ENCODE measurements at regions of chr20 and their contacts with region 1.

Region 1: GRCh38 chr20:39885975-39886649 is 802.9 kb downstream of the MAFB start:
- DNase-seq: peak; percentile 33 to 70
- ATAC-seq: peak; percentile 63 to 82
- H3K4me3 ChIP-seq: no peak overlapping the region
- H3K27ac ChIP-seq: no peak overlapping the region
- H3K4me1 ChIP-seq: no peaks in the 10 kb centered on the region
- H3K27me3 ChIP-seq: no peaks in the 10 kb centered on the region
- CTCF ChIP-seq: peak in 4 of 5 experiments; percentile 57 to 69 (median 63)
- POLR2A ChIP-seq: no peak

Region 2: GRCh38 chr20:39623584-39624234 is 262.4 kb before region 1 on chr20:
- in situ Hi-C with region 1: no loop called
- intact Hi-C with region 1: no loop called
- DNase-seq: peak in 1 of 2 donors; percentile 14
- ATAC-seq: peak; percentile 66 to 69
- H3K4me3 ChIP-seq: no peak overlapping the region
- H3K27ac ChIP-seq: peak overlapping the region in 2 of 4 donors; percentile 7 to 21
- H3K4me1 ChIP-seq: no peaks in the 10 kb centered on the region
- H3K27me3 ChIP-seq: no peaks in the 10 kb centered on the region
- CTCF ChIP-seq: no peak
- POLR2A ChIP-seq: no peak

Region 3: GRCh38 chr20:39849664-39850063 is 36.4 kb before region 1 on chr20:
- in situ Hi-C with region 1: no loop called
- intact Hi-C with region 1: no loop called
- DNase-seq: peak; percentile 35 to 60
- ATAC-seq: peak in 1 of 2 donors; percentile 26
- H3K4me3 ChIP-seq: no peak overlapping the region
- H3K27ac ChIP-seq: no peak overlapping the region
- H3K4me1 ChIP-seq: peaks cover 9 to 13% of the 10 kb centered on the region in 2 donors
- H3K27me3 ChIP-seq: no peaks in the 10 kb centered on the region
- CTCF ChIP-seq: no peak
- POLR2A ChIP-seq: no peak

Region 4: GRCh38 chr20:40251284-40251932 is 365.3 kb after region 1 on chr20:
- in situ Hi-C with region 1: no loop called
- intact Hi-C with region 1: loop called (anchors 1 kb)
- DNase-seq: no peak
- ATAC-seq: no peak
- H3K4me3 ChIP-seq: no peak overlapping the region
- H3K27ac ChIP-seq: no peak overlapping the region
- H3K4me1 ChIP-seq: peaks cover 0 to 4% of the 10 kb centered on the region in 2 donors
- H3K27me3 ChIP-seq: no peaks in the 10 kb centered on the region
- CTCF ChIP-seq: peak; percentile 17 to 53 (median 28)
- POLR2A ChIP-seq: no peak

Region 5: DNA sequence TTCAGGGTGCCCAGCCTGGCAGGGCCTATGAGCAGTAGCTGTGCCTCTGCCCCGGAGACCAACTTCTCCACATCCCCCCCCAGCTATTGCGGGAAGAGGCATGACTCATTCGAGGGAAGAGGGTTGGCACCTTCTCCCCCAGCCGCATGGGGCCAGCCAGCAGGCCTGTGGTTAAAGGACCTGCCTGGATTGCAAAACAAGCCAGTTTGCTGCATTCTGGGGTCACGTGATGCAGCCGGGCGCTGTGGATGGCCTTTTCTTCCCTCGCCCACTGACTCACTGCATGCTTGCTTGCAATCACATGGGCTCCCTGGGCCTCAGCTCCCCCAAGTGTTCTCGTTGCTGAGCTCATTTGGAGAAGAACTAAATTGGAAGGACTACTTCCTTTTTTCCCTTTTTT is 620.5 kb after region 1 on chr20:
- in situ Hi-C with region 1: loop called in 1 of 4 experiments (anchors 25 kb)
- intact Hi-C with region 1: no loop called
- DNase-seq: peak; percentile 84 to 88
- ATAC-seq: peak; percentile 81 to 89
- H3K4me3 ChIP-seq: no peak overlapping the region
- H3K27ac ChIP-seq: no peak overlapping the region
- H3K4me1 ChIP-seq: no peaks in the 10 kb centered on the region
- H3K27me3 ChIP-seq: no peaks in the 10 kb centered on the region
- CTCF ChIP-seq: no peak
- POLR2A ChIP-seq: no peak

Region 6: DNA sequence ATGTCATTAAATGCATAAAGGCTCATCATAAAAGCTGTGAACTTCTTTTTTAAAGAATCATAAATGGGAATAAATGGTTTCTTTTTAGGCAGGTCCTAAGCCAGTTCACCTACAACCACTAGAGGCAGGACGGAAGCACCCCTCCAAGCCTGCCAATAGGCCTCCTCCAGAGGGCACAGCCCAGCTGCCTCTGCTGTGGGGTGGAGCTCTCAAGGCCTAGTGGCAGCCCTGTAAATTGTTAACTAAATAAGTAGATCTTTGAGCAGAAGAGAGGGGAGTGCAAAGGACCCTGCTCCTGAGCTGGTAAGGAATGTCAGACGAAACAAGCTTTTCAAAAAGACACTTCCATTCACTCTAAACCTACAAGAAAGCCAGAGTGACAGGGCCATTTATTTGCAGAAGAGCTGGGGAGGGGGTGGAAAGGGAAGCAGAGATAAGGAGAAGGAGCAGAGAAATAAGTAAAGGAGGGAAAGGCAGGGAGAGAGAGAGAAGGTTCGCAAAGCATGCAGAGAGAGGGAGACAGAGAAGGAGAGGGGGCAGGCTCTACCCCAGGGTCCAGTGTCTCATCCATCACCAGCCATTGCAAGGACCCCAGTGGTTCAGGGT is 821.0 kb after region 1 on chr20:
- in situ Hi-C with region 1: loop called in 1 of 4 experiments (anchors 25 kb)
- intact Hi-C with region 1: no loop called
- DNase-seq: no peak
- ATAC-seq: no peak
- H3K4me3 ChIP-seq: no peak overlapping the region
- H3K27ac ChIP-seq: no peak overlapping the region
- H3K4me1 ChIP-seq: no peaks in the 10 kb centered on the region
- H3K27me3 ChIP-seq: peaks cover 0 to 8% (median 0%) of the 10 kb centered on the region in 3 donors
- CTCF ChIP-seq: no peak
- POLR2A ChIP-seq: no peak

Region 7: DNA sequence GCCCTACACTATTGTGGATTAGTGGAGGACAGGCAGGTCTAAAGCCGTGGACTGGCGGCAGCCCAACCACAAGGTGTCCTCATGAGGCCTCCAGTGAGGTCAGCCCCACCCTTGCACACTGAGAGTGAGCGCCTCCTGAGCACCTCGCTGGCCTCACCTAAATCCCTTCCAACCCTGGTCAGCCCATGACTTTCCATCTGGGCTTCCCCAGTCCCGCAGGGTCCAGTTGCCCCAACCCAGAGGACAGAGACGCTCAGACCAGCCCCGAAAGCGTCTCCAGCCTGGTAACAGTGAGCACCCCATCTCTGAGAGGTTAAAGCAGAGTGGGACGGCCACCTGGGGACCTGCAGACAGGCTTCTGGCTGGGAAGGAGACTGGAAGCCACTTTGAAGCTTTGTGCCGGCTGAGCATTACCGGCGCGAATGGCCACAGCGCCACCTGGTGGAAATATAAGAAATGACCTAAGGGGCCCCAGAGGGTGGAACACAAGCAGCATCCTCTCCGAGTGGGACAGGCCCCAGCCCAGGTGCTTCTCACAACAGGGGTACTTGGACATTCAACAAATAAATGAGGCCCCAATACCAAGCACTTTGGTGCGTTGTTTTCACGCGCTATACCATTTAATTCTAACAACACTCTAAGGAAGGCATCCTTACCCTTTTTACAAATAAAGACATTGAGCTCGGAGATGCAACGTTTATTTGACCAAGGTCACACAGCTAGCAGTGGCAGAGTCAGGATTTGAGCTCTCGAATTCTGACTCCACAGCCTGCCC is 1076.8 kb after region 1 on chr20:
- in situ Hi-C with region 1: loop called in 2 of 4 experiments (anchors 10 to 25 kb)
- intact Hi-C with region 1: no loop called
- DNase-seq: peak; percentile 18 to 48
- ATAC-seq: peak; percentile 73 to 92
- H3K4me3 ChIP-seq: no peak overlapping the region
- H3K27ac ChIP-seq: no peak overlapping the region
- H3K4me1 ChIP-seq: no peaks in the 10 kb centered on the region
- H3K27me3 ChIP-seq: no peaks in the 10 kb centered on the region
- CTCF ChIP-seq: peak; percentile 74 to 92 (median 83)
- POLR2A ChIP-seq: no peak